ENCODE measurements at regions of chr4 and their contacts with region 1.

Region 1: DNA sequence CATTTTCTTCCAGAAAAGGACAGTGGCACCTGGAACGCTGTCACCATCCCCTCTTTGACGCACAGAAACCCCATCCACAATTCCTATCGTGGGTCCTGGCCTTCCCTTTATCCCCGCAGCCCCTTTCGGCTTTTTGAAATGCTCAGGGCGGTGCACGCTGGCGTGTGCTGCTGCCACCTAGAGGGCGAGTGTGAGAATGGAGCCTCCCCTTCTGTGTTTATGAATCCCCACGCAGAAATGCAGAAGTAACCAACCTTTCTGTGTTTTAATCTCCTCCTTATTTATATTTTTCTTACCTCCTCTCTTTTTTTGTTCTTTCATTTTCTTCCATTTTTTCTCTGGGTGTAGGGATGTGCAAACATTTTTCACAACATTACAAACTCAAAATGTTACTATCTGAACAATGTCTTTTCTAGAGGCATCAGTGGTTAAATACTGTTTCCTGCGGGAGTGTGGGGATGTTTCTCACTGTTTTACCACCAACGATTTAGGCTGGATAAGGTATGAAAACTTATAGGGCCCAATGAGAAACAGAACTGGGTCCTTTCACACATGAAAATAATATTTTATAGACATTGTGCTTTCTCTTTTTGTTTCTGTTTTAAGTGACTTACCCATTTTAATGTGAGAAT is 50.0 kb downstream of the TMA16 start:
- DNase-seq: peak; percentile 54 to 82
- H3K4me3 ChIP-seq: peak overlapping the region; percentile 13 to 25 (median 22)
- H3K27ac ChIP-seq: no peak overlapping the region
- H3K4me1 ChIP-seq: peaks cover 0 to 16% (median 7%) of the 10 kb centered on the region in 4 donors
- H3K27me3 ChIP-seq: no peaks in the 10 kb centered on the region
- CTCF ChIP-seq: peak in 5 of 7 experiments; percentile 66 to 85 (median 82)
- EP300 ChIP-seq: no peak
- POLR2A ChIP-seq: no peak

Region 2: DNA sequence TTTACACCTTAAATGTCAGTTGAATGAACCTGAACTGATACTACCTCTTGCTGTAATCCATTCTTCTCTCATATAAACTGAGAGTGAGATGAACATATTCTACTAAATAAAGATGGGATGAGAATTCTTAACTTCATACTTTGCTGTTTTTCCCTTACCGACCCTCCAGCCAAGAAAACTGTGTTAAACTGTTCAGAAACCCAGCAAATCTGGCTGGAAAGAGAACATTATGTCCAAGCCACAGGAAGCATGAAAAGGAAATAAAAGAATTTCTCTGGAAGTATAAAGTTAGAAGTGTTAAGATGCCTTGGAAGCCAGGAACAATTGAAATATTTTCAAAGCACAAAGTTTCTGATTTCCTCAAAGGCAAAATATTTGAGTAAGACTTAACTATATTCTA is 235.1 kb before region 1 on chr4:
- intact Hi-C with region 1: no loop called
- DNase-seq: no peak
- H3K4me3 ChIP-seq: no peak overlapping the region
- H3K27ac ChIP-seq: no peak overlapping the region
- H3K4me1 ChIP-seq: no peaks in the 10 kb centered on the region
- H3K27me3 ChIP-seq: no peaks in the 10 kb centered on the region
- CTCF ChIP-seq: no peak
- EP300 ChIP-seq: no peak
- POLR2A ChIP-seq: no peak

Region 3: GRCh38 chr4:163484906-163485305 is 59.6 kb before region 1 on chr4:
- intact Hi-C with region 1: loop called (anchors 5 kb)
- DNase-seq: peak; percentile 32 to 78
- H3K4me3 ChIP-seq: no peak overlapping the region
- H3K27ac ChIP-seq: no peak overlapping the region
- H3K4me1 ChIP-seq: no peaks in the 10 kb centered on the region
- H3K27me3 ChIP-seq: no peaks in the 10 kb centered on the region
- CTCF ChIP-seq: peak in 5 of 7 experiments; percentile 12 to 63 (median 31)
- EP300 ChIP-seq: no peak
- POLR2A ChIP-seq: no peak

Measured in stomach (tissue), 19 donors.